ENCODE measurements at regions of chr12 and their contacts with region 1.

Region 1: GRCh38 chr12:10190558-10191388 is 11.9 kb downstream of the TMEM52B start:
- DNase-seq: peak; percentile 74
- ATAC-seq: peak; percentile 90
- H3K4me3 ChIP-seq: no peak overlapping the region
- H3K4me3 Mint-ChIP-seq: no peak overlapping the region
- H3K27ac ChIP-seq: no peak overlapping the region
- H3K27ac Mint-ChIP-seq: no peak overlapping the region
- H3K4me1 ChIP-seq: peaks cover 7 to 10% of the 10 kb centered on the region in 2 donors
- H3K4me1 Mint-ChIP-seq: peaks cover 14% of the 10 kb centered on the region
- H3K27me3 ChIP-seq: peaks cover 0 to 42% (median 24%) of the 10 kb centered on the region in 4 experiments
- H3K27me3 Mint-ChIP-seq: peaks cover 60% of the 10 kb centered on the region
- CTCF ChIP-seq: peak; percentile 80

Region 2: GRCh38 chr12:10033783-10034545 is 156.8 kb before region 1 on chr12:
- CTCF ChIA-PET with region 1: no interaction called
- POLR2A ChIA-PET with region 1: no interaction called
- intact Hi-C with region 1: loop called (anchors 10 kb)
- DNase-seq: peak; percentile 20
- ATAC-seq: no peak
- H3K4me3 ChIP-seq: no peak overlapping the region
- H3K4me3 Mint-ChIP-seq: no peak overlapping the region
- H3K27ac ChIP-seq: no peak overlapping the region
- H3K27ac Mint-ChIP-seq: no peak overlapping the region
- H3K4me1 ChIP-seq: no peaks in the 10 kb centered on the region
- H3K4me1 Mint-ChIP-seq: no peaks in the 10 kb centered on the region
- H3K27me3 ChIP-seq: peaks cover 0 to 3% (median 0%) of the 10 kb centered on the region in 4 experiments
- H3K27me3 Mint-ChIP-seq: peaks cover 46% of the 10 kb centered on the region
- CTCF ChIP-seq: peak; percentile 56

Region 3: GRCh38 chr12:10113080-10113479 is 77.7 kb before region 1 on chr12:
- CTCF ChIA-PET with region 1: no interaction called
- POLR2A ChIA-PET with region 1: no interaction called
- intact Hi-C with region 1: no loop called
- DNase-seq: no peak
- ATAC-seq: no peak
- H3K4me3 ChIP-seq: no peak overlapping the region
- H3K4me3 Mint-ChIP-seq: no peak overlapping the region
- H3K27ac ChIP-seq: no peak overlapping the region
- H3K27ac Mint-ChIP-seq: no peak overlapping the region
- H3K4me1 ChIP-seq: no peaks in the 10 kb centered on the region
- H3K4me1 Mint-ChIP-seq: no peaks in the 10 kb centered on the region
- H3K27me3 ChIP-seq: no peaks in the 10 kb centered on the region
- H3K27me3 Mint-ChIP-seq: peaks cover 10% of the 10 kb centered on the region
- CTCF ChIP-seq: no peak

Region 4: DNA sequence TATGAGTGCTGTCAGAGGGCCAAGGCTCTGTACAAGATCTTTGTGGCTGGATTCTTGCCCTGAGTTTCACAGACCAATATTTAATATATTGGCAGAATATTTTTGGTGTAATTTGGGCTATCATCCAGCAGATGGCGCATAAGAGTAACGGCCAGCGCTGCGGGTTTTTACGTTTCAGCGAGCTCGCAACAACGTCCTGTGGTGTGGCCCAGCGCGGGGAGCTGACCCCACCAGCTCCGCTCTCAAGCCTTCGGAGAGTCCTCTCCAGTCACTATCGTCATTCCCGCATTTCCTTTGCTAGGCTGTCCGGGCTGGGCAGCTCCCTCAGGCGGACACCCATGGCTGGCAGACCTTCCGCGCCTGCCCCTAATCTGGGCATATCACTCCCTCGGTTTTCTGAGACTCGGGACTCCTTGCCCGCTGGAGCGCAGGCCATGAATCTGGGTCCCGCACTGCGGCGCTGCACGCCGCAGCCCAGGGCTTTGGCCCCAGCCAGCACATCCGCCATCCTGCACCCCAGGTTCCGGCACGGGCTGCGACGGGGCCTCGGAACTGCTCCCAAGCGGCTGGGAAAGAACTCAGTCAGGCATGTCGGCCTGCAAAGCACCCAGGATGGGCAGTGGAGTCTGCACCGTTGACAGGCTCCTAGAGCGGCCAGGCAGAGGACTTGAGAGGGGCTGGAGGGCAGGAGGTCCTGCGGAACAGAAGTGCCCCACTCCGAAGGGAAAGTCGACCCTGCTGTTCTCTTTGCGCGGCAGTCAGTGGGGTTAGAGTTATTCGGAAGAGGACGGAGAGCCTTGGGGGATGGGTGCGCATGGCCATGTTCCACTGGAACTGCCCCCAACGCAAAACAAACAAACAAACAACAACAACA is 37.3 kb before region 1 on chr12:
- CTCF ChIA-PET with region 1: interaction called, 14 read pairs
- POLR2A ChIA-PET with region 1: no interaction called
- intact Hi-C with region 1: loop called (anchors 1 kb)
- DNase-seq: peak; percentile 77
- ATAC-seq: peak; percentile 75
- H3K4me3 ChIP-seq: peak overlapping the region; percentile 32 to 79 (median 68)
- H3K4me3 Mint-ChIP-seq: peak overlapping the region; percentile 92
- H3K27ac ChIP-seq: no peak overlapping the region
- H3K27ac Mint-ChIP-seq: no peak overlapping the region
- H3K4me1 ChIP-seq: peaks cover 12 to 14% of the 10 kb centered on the region in 2 donors
- H3K4me1 Mint-ChIP-seq: peaks cover 17% of the 10 kb centered on the region
- H3K27me3 ChIP-seq: peaks cover 0 to 16% (median 12%) of the 10 kb centered on the region in 4 experiments
- H3K27me3 Mint-ChIP-seq: peaks cover 31% of the 10 kb centered on the region
- CTCF ChIP-seq: peak; percentile 95

Region 5: GRCh38 chr12:10341892-10342509 is 151.2 kb after region 1 on chr12:
- CTCF ChIA-PET with region 1: no interaction called
- POLR2A ChIA-PET with region 1: no interaction called
- intact Hi-C with region 1: no loop called
- DNase-seq: peak; percentile 43
- ATAC-seq: no peak
- H3K4me3 ChIP-seq: no peak overlapping the region
- H3K4me3 Mint-ChIP-seq: peak overlapping the region; percentile 20
- H3K27ac ChIP-seq: peak overlapping the region in 1 of 2 donors; percentile 54
- H3K27ac Mint-ChIP-seq: peak overlapping the region; percentile 38
- H3K4me1 ChIP-seq: peaks cover 6 to 7% of the 10 kb centered on the region in 2 donors
- H3K4me1 Mint-ChIP-seq: peaks cover 15% of the 10 kb centered on the region
- H3K27me3 ChIP-seq: no peaks in the 10 kb centered on the region
- H3K27me3 Mint-ChIP-seq: no peaks in the 10 kb centered on the region
- CTCF ChIP-seq: no peak

Measured in B cell (primary cell).